ENCODE measurements at regions of chr3 and their contacts with region 1.

Region 1: DNA sequence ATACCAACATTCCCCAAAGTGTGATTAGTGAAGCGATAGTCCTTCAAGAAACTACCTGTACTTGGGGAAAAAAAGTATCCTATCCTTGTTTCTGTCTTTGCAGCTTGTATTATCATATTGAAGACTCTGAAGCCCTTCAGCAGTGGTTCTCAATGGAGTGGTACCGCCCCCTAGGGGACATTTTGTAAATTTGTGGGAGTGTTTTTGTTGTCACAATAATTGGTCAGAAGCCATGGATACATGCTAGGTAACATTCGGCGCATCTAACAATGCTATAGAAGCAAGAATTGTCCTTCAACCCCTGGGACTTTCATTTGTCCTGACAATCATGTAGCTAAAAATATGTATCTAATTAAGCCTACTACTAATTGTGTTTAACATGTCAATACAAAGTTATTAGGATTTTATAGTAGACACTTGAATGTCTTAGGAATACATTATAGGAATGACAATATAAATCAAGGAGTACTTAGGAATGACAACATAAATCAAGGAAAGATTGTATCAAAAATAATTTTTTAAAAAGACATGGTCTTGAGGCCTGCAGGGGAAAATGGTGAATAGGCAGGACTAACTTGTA is 53.7 kb downstream of the NMD3 start:
- DNase-seq: no peak
- ATAC-seq: no peak
- H3K4me3 Mint-ChIP-seq: no peak overlapping the region
- H3K27ac Mint-ChIP-seq: no peak overlapping the region
- H3K4me1 Mint-ChIP-seq: no peaks in the 10 kb centered on the region
- H3K27me3 Mint-ChIP-seq: no peaks in the 10 kb centered on the region
- CTCF ChIP-seq: no peak

Region 2: GRCh38 chr3:160686955-160687535 is 587.8 kb before region 1 on chr3:
- CTCF ChIA-PET with region 1: interaction called, 10 read pairs
- POLR2A ChIA-PET with region 1: no interaction called
- intact Hi-C with region 1: no loop called
- DNase-seq: no peak
- ATAC-seq: no peak
- H3K4me3 Mint-ChIP-seq: no peak overlapping the region
- H3K27ac Mint-ChIP-seq: no peak overlapping the region
- H3K4me1 Mint-ChIP-seq: no peaks in the 10 kb centered on the region
- H3K27me3 Mint-ChIP-seq: no peaks in the 10 kb centered on the region
- CTCF ChIP-seq: no peak

Region 3: GRCh38 chr3:160707187-160707794 is 567.5 kb before region 1 on chr3:
- CTCF ChIA-PET with region 1: interaction called, 7 read pairs
- POLR2A ChIA-PET with region 1: no interaction called
- intact Hi-C with region 1: loop called (anchors 1 kb)
- DNase-seq: no peak
- ATAC-seq: peak; percentile 60
- H3K4me3 Mint-ChIP-seq: no peak overlapping the region
- H3K27ac Mint-ChIP-seq: no peak overlapping the region
- H3K4me1 Mint-ChIP-seq: no peaks in the 10 kb centered on the region
- H3K27me3 Mint-ChIP-seq: peaks cover 16% of the 10 kb centered on the region
- CTCF ChIP-seq: no peak

Region 4: DNA sequence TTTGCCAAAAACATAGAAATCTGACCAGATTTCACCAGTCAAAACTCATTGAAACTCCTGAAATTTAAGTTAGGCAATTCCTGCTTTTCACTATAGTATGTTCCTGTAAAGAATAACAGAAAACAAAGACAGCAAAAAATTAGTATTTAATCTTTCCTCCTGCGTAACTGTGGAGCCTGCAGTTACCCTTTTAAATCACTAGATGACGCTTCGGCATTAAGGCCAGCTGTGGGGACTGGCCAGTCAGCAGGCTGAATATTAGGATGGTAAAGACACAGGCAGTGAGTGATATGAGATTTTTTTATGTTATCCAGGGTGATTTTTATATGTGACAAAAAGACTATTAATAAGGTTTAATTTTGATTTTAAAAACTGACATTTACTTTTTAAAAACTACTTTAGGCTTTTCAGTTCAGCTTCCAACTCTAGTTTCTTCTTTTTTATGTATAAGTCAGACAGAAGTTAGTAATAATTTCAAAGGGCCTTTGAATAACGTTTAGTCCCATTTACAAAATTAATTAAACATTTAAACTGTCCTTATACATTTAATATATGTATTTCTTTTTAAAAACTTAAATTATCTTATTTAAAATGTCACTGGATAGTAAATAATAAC is 353.7 kb before region 1 on chr3:
- CTCF ChIA-PET with region 1: interaction called, 3 read pairs
- POLR2A ChIA-PET with region 1: no interaction called
- intact Hi-C with region 1: loop called (anchors 1 kb)
- DNase-seq: no peak
- ATAC-seq: no peak
- H3K4me3 Mint-ChIP-seq: no peak overlapping the region
- H3K27ac Mint-ChIP-seq: no peak overlapping the region
- H3K4me1 Mint-ChIP-seq: no peaks in the 10 kb centered on the region
- H3K27me3 Mint-ChIP-seq: no peaks in the 10 kb centered on the region
- CTCF ChIP-seq: no peak

Region 5: GRCh38 chr3:160941885-160942494 is 332.8 kb before region 1 on chr3:
- CTCF ChIA-PET with region 1: interaction called, 6 read pairs
- POLR2A ChIA-PET with region 1: no interaction called
- intact Hi-C with region 1: loop called (anchors 5 kb)
- DNase-seq: no peak
- ATAC-seq: peak; percentile 87
- H3K4me3 Mint-ChIP-seq: no peak overlapping the region
- H3K27ac Mint-ChIP-seq: no peak overlapping the region
- H3K4me1 Mint-ChIP-seq: peaks cover 4% of the 10 kb centered on the region
- H3K27me3 Mint-ChIP-seq: no peaks in the 10 kb centered on the region
- CTCF ChIP-seq: no peak

Region 6: DNA sequence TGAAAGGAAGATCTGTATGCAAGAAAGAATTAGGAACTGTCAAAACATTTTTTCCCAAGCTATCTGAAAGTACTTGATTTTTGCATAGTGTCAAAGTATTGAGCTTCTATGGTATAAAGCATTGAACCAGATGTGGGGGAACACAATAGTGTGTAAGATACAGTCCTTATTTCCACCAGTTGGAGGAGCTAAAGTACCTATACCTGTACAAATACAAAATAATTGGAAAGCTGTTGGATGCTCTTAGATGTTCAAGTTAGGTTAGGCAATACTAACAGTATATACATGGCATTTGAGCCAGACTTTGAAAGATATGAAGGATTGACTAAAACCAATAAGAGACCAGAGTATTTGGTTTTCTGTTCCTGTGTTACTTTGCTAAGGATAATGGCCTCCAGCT is 318.0 kb before region 1 on chr3:
- CTCF ChIA-PET with region 1: interaction called, 22 read pairs
- POLR2A ChIA-PET with region 1: no interaction called
- intact Hi-C with region 1: loop called (anchors 1 kb)
- DNase-seq: no peak
- ATAC-seq: peak; percentile 54
- H3K4me3 Mint-ChIP-seq: no peak overlapping the region
- H3K27ac Mint-ChIP-seq: no peak overlapping the region
- H3K4me1 Mint-ChIP-seq: no peaks in the 10 kb centered on the region
- H3K27me3 Mint-ChIP-seq: peaks cover 2% of the 10 kb centered on the region
- CTCF ChIP-seq: no peak

Region 7: GRCh38 chr3:161409069-161409468 is 134.3 kb after region 1 on chr3:
- CTCF ChIA-PET with region 1: no interaction called
- POLR2A ChIA-PET with region 1: no interaction called
- intact Hi-C with region 1: loop called (anchors 1 kb)
- DNase-seq: no peak
- ATAC-seq: no peak
- H3K4me3 Mint-ChIP-seq: no peak overlapping the region
- H3K27ac Mint-ChIP-seq: no peak overlapping the region
- H3K4me1 Mint-ChIP-seq: no peaks in the 10 kb centered on the region
- H3K27me3 Mint-ChIP-seq: peaks cover 8% of the 10 kb centered on the region
- CTCF ChIP-seq: no peak

Measured in activated B cell treated with CpG ODN at 0.5 μM for 24 hours (primary cell).